ENCODE measurements at regions of chr6 and their contacts with region 1.

Region 1: GRCh38 chr6:150079604-150080003 is 10.7 kb upstream of the ULBP3 start:
- H3K4me3 ChIP-seq: no peak overlapping the region
- H3K27ac ChIP-seq: peak overlapping the region; percentile 16; the same call in 1 of the 2 replicates
- H3K4me1 ChIP-seq: peaks cover 14% of the 10 kb centered on the region
- CTCF ChIP-seq: no peak; the same call in 1 of the 2 replicates

Region 2: DNA sequence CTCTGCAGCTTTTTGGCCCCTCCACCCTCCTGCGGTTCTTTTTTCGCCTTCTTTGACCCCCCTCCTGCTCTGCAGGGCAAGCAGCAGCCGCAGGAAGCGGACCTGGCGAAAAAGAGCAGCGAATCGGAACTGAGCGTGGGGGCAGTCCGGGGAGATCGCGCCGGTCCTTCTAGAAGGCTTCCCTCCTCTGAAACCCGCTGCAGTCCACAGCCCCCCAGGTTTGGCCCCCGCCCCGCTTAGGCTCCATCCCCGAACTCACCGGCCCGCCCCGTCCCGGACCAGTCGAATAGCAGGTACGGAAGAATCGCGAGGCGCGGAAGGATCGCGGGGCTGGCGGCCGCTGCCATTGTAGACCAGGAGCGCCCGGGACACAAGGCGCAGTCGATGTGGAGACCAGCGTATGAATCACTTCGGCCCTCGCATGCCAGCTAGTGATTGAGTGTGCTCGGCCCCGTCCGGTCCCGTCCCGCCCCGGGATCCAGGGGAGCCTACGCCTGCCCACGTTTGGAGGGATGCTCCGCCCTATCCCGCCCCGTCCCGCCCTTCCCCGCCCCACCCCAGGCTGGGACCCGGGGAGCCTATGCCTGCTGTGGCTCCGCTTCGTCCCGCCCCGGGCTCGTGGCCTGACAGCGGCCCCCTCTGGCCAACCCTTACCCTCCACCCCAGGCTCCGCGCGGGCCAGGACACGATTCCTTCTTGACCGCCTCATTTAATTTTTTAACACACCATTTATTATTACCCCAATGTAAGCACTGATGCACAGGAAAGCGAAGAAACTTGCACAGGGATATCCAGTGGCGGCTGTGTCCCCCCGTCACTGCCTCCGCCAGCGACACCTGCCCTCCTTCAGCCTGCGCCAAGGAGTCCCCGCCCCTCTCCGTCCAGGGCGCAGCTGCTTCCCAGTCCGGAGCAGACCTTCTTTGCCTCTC is 10.6 kb before region 1 on chr6 and contains the start of gene ULBP3:
- CTCF ChIA-PET with region 1: interaction called, 57 read pairs
- POLR2A ChIA-PET with region 1: interaction called, 4 read pairs
- H3K4me3 ChIP-seq: peak within 1 kb of the TSS; percentile 70
- H3K27ac ChIP-seq: peak within 1 kb of the TSS; percentile 65
- H3K4me1 ChIP-seq: peaks cover 6% of the 10 kb centered on the region; the same call in 1 of the 2 replicates
- CTCF ChIP-seq: peak; percentile 65

Region 3: GRCh38 chr6:150119173-150119572 is 39.6 kb after region 1 on chr6:
- CTCF ChIA-PET with region 1: interaction called, 14 read pairs
- POLR2A ChIA-PET with region 1: no interaction called
- H3K4me3 ChIP-seq: no peak overlapping the region
- H3K27ac ChIP-seq: no peak overlapping the region
- H3K4me1 ChIP-seq: no peaks in the 10 kb centered on the region
- CTCF ChIP-seq: no peak

Region 4: GRCh38 chr6:150142670-150143515 is 63.3 kb after region 1 on chr6 and contains the start of gene PPP1R14C:
- CTCF ChIA-PET with region 1: interaction called, 40 read pairs
- POLR2A ChIA-PET with region 1: interaction called, 4 read pairs
- H3K4me3 ChIP-seq: peak within 1 kb of the TSS; percentile 79
- H3K27ac ChIP-seq: peak within 1 kb of the TSS; percentile 90
- H3K4me1 ChIP-seq: peaks cover 33% of the 10 kb centered on the region
- CTCF ChIP-seq: peak; percentile 75

Region 5: GRCh38 chr6:150334790-150335783 is 255.5 kb after region 1 on chr6:
- CTCF ChIA-PET with region 1: interaction called, 37 read pairs
- POLR2A ChIA-PET with region 1: no interaction called
- H3K4me3 ChIP-seq: no peak overlapping the region
- H3K27ac ChIP-seq: no peak overlapping the region
- H3K4me1 ChIP-seq: peaks cover 2% of the 10 kb centered on the region; the same call in 1 of the 2 replicates
- CTCF ChIP-seq: no peak; the same call in 1 of the 2 replicates

Region 6: GRCh38 chr6:150395398-150396009 is 315.9 kb after region 1 on chr6:
- CTCF ChIA-PET with region 1: interaction called, 149 read pairs
- POLR2A ChIA-PET with region 1: interaction called, 6 read pairs
- H3K4me3 ChIP-seq: no peak overlapping the region
- H3K27ac ChIP-seq: no peak overlapping the region
- H3K4me1 ChIP-seq: no peaks in the 10 kb centered on the region
- CTCF ChIP-seq: peak; percentile 47; the same call in 1 of the 2 replicates

Region 7: GRCh38 chr6:150813319-150813992 is 733.9 kb after region 1 on chr6:
- CTCF ChIA-PET with region 1: interaction called, 18 read pairs
- POLR2A ChIA-PET with region 1: no interaction called
- H3K4me3 ChIP-seq: no peak overlapping the region
- H3K27ac ChIP-seq: no peak overlapping the region; the same call in 1 of the 2 replicates
- H3K4me1 ChIP-seq: peaks cover 11% of the 10 kb centered on the region; the same call in 1 of the 2 replicates
- CTCF ChIP-seq: no peak

Region 8: DNA sequence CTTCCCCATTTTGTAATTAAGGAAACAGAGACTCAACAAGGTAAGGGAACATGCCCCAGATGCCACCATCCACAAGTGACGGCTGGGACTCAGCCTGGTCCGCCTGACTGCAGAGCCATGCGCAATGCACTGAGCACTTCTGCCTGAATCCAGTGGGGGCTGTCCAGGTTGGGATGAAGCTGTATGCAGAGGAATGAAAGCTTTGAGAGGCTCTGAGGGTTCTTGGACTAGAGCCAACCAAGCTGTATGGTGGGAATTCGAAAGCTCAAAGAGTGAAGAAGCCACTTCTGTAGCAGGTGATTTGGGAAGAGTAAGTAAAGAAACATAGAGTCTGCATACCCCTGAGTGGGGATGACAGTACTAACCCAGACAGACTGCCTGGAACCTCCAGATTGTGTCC is 1032.5 kb after region 1 on chr6:
- CTCF ChIA-PET with region 1: no interaction called
- POLR2A ChIA-PET with region 1: no interaction called
- H3K4me3 ChIP-seq: no peak overlapping the region
- H3K27ac ChIP-seq: no peak overlapping the region
- H3K4me1 ChIP-seq: peaks cover 2% of the 10 kb centered on the region; the same call in 1 of the 2 replicates
- CTCF ChIP-seq: no peak

Measured in HEK293 (cell line).